ENCODE measurements at regions of chr21 and their contacts with region 1.

Region 1: DNA sequence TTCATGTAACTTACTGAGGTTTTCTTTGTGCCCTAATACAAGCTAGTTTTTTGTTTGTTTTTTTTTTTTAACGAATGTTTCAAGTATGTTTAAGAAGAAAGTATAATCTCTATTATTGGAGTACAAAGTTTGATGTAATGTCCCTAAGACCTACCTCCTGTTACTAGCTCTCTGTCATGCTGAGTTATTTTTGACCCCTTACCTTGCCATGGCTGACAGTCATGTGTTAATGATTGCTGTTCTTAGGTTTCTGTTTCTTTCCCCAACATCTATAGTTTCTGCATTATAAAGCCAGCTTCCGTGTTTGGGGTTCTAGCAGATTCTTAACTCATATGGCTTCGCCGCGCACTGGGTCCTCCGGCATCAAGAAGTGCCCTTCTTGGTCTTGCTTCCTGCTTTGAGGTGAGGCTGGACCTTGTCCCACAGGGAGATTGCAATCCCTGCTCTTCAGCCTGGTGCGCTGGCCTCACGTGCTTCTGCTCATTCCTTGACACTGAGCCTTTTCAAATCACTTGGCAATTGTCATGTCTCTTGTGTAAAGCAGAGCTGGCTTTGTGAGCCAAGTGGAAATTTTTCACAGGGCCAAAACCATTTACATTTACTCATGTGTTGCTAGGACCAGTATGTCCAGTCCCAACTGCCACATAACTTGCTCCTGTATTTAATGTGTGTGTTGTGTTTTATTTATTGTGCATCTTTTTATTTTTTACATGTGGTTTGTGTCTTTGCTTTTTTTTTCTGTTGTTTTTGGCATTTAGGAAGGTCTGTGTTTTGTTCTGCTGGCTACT is 135.0 kb upstream of the COL6A1 start:
- DNase-seq: no peak
- H3K4me3 ChIP-seq: no peak overlapping the region
- H3K27ac ChIP-seq: no peak overlapping the region
- H3K4me1 ChIP-seq: no peaks in the 10 kb centered on the region
- H3K27me3 ChIP-seq: no peaks in the 10 kb centered on the region
- CTCF ChIP-seq: no peak
- POLR2A ChIP-seq: no peak

Region 2: GRCh38 chr21:45670731-45671130 is 175.8 kb before region 1 on chr21:
- intact Hi-C with region 1: no loop called
- DNase-seq: no peak
- H3K4me3 ChIP-seq: no peak overlapping the region
- H3K27ac ChIP-seq: no peak overlapping the region
- H3K4me1 ChIP-seq: no peaks in the 10 kb centered on the region
- H3K27me3 ChIP-seq: no peaks in the 10 kb centered on the region
- CTCF ChIP-seq: no peak
- POLR2A ChIP-seq: no peak

Region 3: GRCh38 chr21:45923146-45923545 is 76.6 kb after region 1 on chr21:
- intact Hi-C with region 1: loop called (anchors 10 kb)
- DNase-seq: peak; percentile 89
- H3K4me3 ChIP-seq: no peak overlapping the region
- H3K27ac ChIP-seq: no peak overlapping the region
- H3K4me1 ChIP-seq: peaks cover 0 to 11% (median 4%) of the 10 kb centered on the region in 6 donors
- H3K27me3 ChIP-seq: no peaks in the 10 kb centered on the region
- CTCF ChIP-seq: peak; percentile 60 to 91 (median 85)
- POLR2A ChIP-seq: no peak

Region 4: GRCh38 chr21:46038871-46039397 is 192.4 kb after region 1 on chr21:
- intact Hi-C with region 1: no loop called
- DNase-seq: peak; percentile 85
- H3K4me3 ChIP-seq: no peak overlapping the region
- H3K27ac ChIP-seq: peak overlapping the region; percentile 30 to 80 (median 66)
- H3K4me1 ChIP-seq: peaks cover 0 to 22% (median 9%) of the 10 kb centered on the region in 6 donors
- H3K27me3 ChIP-seq: no peaks in the 10 kb centered on the region
- CTCF ChIP-seq: no peak
- POLR2A ChIP-seq: no peak